Activated CD4-positive, alpha-beta T cell treated with anti-CD3 and anti-CD28 coated beads for 36 hours (primary cell): ENCODE measurements at regions of chr4 and their contacts with region 1.

Region 1: GRCh38 chr4:69881173-69881773 is 21.3 kb upstream of the SULT1E1 start:
- DNase-seq: peak; percentile 41
- ATAC-seq: peak; percentile 69
- H3K4me3 Mint-ChIP-seq: no peak overlapping the region
- H3K27ac Mint-ChIP-seq: no peak overlapping the region
- H3K4me1 Mint-ChIP-seq: no peaks in the 10 kb centered on the region
- H3K27me3 Mint-ChIP-seq: peaks cover 4% of the 10 kb centered on the region

Region 2: GRCh38 chr4:69322055-69322454 is 559.2 kb before region 1 on chr4:
- CTCF ChIA-PET with region 1: no interaction called
- POLR2A ChIA-PET with region 1: no interaction called
- intact Hi-C with region 1: loop called (anchors 1 to 5 kb)
- DNase-seq: no peak
- ATAC-seq: no peak
- H3K4me3 Mint-ChIP-seq: no peak overlapping the region
- H3K27ac Mint-ChIP-seq: no peak overlapping the region
- H3K4me1 Mint-ChIP-seq: no peaks in the 10 kb centered on the region
- H3K27me3 Mint-ChIP-seq: no peaks in the 10 kb centered on the region

Region 3: DNA sequence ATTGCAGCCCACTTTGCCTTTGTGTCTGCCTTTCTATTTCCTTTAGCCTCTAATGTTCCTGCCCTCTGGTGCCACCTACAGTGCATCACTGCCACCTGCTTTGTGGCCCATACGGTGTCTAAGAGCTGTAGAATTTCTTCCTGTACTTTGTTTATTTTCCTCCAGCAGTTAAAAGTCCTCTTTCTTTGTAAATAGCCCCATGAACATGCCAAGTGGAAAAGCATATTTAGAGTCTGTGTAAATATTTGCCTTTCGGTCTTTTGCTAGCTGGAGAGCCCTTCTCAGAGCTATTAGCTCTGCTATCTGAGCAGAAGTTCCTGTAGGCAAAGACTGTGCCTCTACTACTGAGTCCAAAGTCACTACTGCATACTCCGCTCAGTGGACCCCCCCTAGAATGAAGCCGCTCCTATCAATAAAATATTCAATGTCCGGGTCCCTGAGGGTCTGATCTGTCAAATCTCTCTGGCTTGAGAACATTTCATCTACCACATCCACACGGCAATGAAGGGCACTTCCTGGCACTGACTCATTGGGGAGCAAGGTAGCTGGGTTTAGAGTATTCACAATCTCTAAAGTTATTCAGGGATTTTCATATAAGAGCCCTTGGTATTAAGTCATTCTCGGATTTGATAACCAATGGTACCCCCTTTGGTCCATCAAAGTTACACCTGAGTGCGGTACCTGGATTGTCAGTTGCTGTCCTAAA is 57.6 kb before region 1 on chr4:
- CTCF ChIA-PET with region 1: interaction called, 3 read pairs
- POLR2A ChIA-PET with region 1: no interaction called
- intact Hi-C with region 1: loop called in 1 of 2 experiments (anchors 2 kb)
- DNase-seq: peak; percentile 71
- ATAC-seq: peak; percentile 94
- H3K4me3 Mint-ChIP-seq: no peak overlapping the region
- H3K27ac Mint-ChIP-seq: no peak overlapping the region
- H3K4me1 Mint-ChIP-seq: peaks cover 5% of the 10 kb centered on the region
- H3K27me3 Mint-ChIP-seq: no peaks in the 10 kb centered on the region

Region 4: DNA sequence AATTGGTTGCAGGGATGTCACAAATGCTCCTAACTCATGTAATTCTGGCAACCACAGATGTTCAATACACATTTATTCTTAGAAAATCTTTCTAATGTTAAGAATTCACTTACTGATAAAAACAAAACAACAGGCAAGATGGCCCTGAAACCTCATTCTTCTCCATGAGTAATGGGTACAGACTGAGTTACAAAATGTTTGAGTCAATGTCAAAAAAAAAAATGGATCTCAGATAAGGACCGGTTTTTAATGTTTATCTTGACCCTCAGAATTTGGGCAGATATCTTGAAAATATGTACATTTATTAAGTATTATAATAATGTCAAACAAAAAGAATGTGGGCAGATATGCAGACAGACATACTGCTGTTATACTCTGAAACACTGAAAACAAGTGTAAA is 19.5 kb before region 1 on chr4:
- CTCF ChIA-PET with region 1: interaction called, 5 read pairs
- POLR2A ChIA-PET with region 1: no interaction called
- intact Hi-C with region 1: loop called in 1 of 2 experiments (anchors 2 kb)
- DNase-seq: no peak
- ATAC-seq: no peak
- H3K4me3 Mint-ChIP-seq: no peak overlapping the region
- H3K27ac Mint-ChIP-seq: no peak overlapping the region
- H3K4me1 Mint-ChIP-seq: no peaks in the 10 kb centered on the region
- H3K27me3 Mint-ChIP-seq: no peaks in the 10 kb centered on the region

Region 5: DNA sequence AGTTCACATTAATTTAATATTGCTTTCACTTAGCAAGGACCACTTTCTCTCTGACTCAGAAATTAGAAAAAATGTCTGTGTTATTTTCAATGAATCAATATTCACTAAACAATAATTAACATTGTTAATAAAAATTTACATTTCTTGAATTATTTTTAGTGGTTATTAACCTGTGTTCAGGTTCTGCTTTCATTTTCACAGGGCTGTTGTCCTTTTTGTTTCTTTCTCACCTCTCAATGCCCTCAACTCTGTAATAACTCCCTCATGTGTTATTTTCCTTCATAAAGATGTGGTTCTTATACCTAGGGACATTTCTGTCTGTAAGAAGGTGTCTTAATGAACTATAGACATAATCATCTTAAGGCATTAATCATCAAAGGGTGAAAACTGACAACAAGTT is 229.6 kb after region 1 on chr4:
- CTCF ChIA-PET with region 1: no interaction called
- POLR2A ChIA-PET with region 1: no interaction called
- intact Hi-C with region 1: no loop called
- DNase-seq: no peak
- ATAC-seq: no peak
- H3K4me3 Mint-ChIP-seq: no peak overlapping the region
- H3K27ac Mint-ChIP-seq: no peak overlapping the region
- H3K4me1 Mint-ChIP-seq: no peaks in the 10 kb centered on the region
- H3K27me3 Mint-ChIP-seq: no peaks in the 10 kb centered on the region

Region 6: DNA sequence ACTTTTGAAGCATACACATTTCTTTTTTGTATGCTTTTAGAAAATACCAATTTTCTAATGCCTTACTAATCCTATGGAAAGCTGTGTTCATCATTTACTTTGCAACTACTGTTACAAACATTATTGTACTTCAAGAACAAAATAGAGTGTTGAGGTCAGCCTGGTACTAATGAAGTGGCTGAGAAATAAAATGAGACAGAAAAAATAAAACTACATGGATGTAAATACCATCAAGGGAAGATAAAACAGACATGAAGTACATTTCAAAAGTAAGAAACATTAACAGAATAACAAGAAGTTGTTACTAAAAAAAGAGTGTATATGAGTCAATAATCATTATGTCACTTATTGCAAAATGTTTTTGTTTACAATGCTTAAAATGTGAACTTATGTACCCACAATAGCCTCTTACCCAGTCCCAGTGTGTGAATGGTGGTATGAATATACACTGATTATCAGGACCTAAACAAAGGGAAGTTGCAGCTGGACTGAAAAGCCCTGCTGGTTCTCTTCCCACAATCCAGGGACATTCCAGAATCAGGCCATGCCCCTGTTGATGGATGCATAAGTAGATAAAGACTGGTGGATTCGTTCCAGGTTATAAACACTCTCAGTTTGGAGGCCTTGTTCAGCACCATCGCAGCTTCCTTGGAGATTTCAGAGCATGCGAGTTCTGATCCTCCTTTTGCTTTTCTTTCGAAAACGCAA is 358.8 kb after region 1 on chr4:
- CTCF ChIA-PET with region 1: no interaction called
- POLR2A ChIA-PET with region 1: no interaction called
- intact Hi-C with region 1: no loop called
- DNase-seq: no peak
- ATAC-seq: no peak
- H3K4me3 Mint-ChIP-seq: no peak overlapping the region
- H3K27ac Mint-ChIP-seq: no peak overlapping the region
- H3K4me1 Mint-ChIP-seq: no peaks in the 10 kb centered on the region
- H3K27me3 Mint-ChIP-seq: no peaks in the 10 kb centered on the region